ENCODE measurements at regions of chr4 and their contacts with region 1.

Region 1: DNA sequence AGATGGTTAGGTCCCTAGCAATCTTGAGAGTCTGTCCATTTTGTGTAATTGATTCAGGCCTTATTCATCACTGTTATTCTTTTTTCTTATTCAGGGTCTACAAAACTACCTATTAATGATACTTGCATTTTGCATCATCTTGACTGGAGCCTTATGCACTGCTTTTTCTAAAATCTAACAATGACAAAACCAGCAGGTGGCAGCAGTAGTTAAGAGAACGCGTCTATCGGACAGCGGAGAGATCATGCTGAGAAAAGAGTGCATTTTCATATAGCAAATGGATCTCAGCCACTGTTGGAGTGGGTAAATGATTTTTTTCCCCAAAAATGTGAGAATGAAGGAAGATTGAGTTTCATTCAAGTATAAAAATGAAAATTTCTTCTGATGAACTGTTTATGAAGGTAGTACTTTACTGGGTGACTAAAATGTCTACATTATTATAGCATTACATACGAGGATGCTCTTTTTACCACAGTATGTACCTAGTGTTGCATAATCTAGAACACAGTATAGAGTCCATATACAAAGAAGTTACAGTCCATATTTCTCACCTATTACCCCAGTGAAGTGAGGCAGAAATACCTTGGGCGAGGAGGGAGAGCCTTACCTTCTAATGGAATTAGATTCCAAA is 43.2 kb downstream of the TMEM144 start:
- DNase-seq: peak; percentile 21
- CTCF ChIP-seq: peak; percentile 71

Region 2: GRCh38 chr4:158193171-158193749 is 60.2 kb before region 1 on chr4:
- in situ Hi-C with region 1: loop called (anchors 10 kb)
- DNase-seq: peak; percentile 21
- CTCF ChIP-seq: peak; percentile 44

Region 3: DNA sequence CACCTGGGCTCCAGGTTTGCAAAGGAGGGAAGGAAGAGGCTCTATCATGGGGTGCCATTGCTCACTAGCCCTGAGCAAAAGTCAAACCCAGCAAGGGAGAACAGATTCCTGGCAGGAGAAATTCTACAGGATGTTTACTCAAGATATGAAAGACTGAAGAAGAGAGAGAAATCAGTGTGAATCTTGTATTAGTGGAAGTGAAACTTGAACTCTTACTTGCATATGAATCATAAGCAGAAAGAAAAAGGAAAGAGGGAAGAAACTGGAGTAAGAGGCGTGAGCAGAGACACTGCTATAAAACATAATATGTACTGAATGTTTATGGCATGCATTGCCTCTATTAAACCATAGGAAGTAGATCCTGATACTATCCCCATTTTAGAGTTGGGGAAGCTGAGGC is 357.3 kb after region 1 on chr4:
- in situ Hi-C with region 1: loop called (anchors 10 kb)
- DNase-seq: peak; percentile 25
- CTCF ChIP-seq: no peak

Region 4: GRCh38 chr4:158826057-158826456 is 572.6 kb after region 1 on chr4:
- in situ Hi-C with region 1: loop called (anchors 25 kb)
- DNase-seq: no peak
- CTCF ChIP-seq: no peak

Region 5: GRCh38 chr4:159446266-159446976 is 1193.0 kb after region 1 on chr4:
- in situ Hi-C with region 1: loop called (anchors 25 kb)
- DNase-seq: peak; percentile 50
- CTCF ChIP-seq: peak; percentile 67

Measured in GM13976 (cell line).